Aorta (tissue), 5 donors: ENCODE measurements at regions of chr22 and their contacts with region 1.

Region 1: GRCh38 chr22:30253205-30253852 is 6.8 kb upstream of the LIF start:
- DNase-seq: peak; percentile 82 to 88
- ATAC-seq: peak; percentile 9
- H3K4me3 ChIP-seq: no peak overlapping the region
- H3K27ac ChIP-seq: no peak overlapping the region
- H3K4me1 ChIP-seq: no peaks in the 10 kb centered on the region
- H3K27me3 ChIP-seq: no peaks in the 10 kb centered on the region

Region 2: GRCh38 chr22:29587938-29588699 is 665.2 kb before region 1 on chr22:
- intact Hi-C with region 1: no loop called
- DNase-seq: no peak
- ATAC-seq: no peak
- H3K4me3 ChIP-seq: no peak overlapping the region
- H3K27ac ChIP-seq: no peak overlapping the region
- H3K4me1 ChIP-seq: no peaks in the 10 kb centered on the region
- H3K27me3 ChIP-seq: no peaks in the 10 kb centered on the region

Region 3: DNA sequence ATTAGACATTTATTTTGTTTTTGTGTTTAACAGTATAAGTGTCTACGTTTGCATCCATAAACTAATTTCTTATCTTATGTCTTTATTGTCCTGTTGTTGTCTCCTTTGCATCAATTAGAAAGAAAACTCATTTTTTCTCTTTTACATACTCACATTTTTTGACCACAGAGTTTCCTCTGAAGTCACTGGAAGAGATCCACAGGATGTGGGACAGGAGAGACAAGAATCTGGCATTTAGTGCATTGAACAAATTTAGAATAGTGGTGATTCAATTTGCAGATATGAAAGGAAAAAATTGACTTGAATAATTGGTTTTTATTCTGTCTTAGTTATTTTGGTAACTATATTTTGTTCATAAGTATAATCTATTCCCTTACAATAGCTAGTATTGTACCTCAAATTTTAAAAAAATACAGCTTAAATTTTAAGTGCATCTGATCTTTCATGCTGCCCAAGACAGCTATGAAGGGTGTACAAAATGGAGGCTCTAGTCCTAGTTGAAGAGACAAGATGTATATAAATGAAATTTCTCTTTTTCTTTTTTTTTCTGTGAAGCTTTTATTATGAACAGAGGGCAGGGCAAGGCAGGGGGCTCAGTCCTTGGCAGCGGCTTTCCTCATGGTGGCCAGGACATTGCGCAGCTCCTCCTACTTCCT is 148.7 kb before region 1 on chr22:
- intact Hi-C with region 1: loop called (anchors 1 kb)
- DNase-seq: no peak
- ATAC-seq: no peak
- H3K4me3 ChIP-seq: no peak overlapping the region
- H3K27ac ChIP-seq: no peak overlapping the region
- H3K4me1 ChIP-seq: no peaks in the 10 kb centered on the region
- H3K27me3 ChIP-seq: no peaks in the 10 kb centered on the region

Region 4: GRCh38 chr22:30195245-30196140 is 57.8 kb before region 1 on chr22:
- intact Hi-C with region 1: no loop called
- DNase-seq: no peak
- ATAC-seq: peak; percentile 51
- H3K4me3 ChIP-seq: no peak overlapping the region
- H3K27ac ChIP-seq: peak overlapping the region in 1 of 2 donors; percentile 49
- H3K4me1 ChIP-seq: peaks cover 3 to 5% of the 10 kb centered on the region in 2 donors
- H3K27me3 ChIP-seq: no peaks in the 10 kb centered on the region

Region 5: DNA sequence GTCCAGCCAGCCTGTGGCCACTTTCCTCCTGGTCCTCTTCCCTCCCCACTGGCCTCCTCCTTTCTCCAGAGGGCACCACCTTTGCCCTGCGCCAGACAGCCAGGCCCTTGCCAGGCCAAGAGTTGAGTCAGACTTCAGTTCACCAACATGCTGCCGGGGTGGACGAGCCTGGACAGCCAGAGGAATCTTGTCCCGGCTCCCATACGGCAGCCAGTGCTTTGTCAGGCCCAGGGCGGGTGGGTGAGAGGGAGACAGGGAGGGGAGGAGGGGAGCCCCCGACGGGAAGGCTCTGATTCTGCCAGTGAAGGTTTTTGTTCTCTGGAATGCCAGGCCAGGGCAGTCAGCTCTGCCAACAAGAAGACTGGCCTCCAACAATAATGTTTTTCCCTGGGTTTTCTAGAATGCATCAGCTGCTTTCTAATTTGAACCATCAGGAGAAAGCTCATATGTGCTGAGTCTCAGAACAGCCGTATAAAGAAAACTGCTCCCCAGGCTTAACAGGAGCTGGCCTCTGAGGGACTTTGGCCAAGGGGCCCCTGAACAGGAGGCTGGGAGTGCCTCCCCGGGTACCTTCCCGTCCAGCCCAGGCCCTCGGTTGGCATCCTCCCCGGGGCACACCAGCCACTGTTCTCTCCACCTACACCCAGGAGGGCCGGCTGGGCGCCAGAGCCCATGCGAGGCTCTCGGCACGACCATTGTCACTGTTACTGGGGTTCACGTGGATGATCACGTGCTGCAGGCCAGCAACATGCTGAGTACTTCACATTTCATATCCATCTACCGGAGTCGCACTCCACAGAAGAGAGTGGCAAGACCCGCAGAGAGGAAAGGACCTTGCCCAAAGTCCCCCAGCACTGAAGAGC is 35.4 kb before region 1 on chr22:
- intact Hi-C with region 1: loop called in 1 of 2 experiments (anchors 5 kb)
- DNase-seq: peak; percentile 77 to 83
- ATAC-seq: peak; percentile 73
- H3K4me3 ChIP-seq: no peak overlapping the region
- H3K27ac ChIP-seq: peak overlapping the region in 1 of 2 donors; percentile 55
- H3K4me1 ChIP-seq: peaks cover 0 to 2% of the 10 kb centered on the region in 2 donors
- H3K27me3 ChIP-seq: no peaks in the 10 kb centered on the region